ENCODE measurements at regions of chr10 and their contacts with region 1.

Region 1: DNA sequence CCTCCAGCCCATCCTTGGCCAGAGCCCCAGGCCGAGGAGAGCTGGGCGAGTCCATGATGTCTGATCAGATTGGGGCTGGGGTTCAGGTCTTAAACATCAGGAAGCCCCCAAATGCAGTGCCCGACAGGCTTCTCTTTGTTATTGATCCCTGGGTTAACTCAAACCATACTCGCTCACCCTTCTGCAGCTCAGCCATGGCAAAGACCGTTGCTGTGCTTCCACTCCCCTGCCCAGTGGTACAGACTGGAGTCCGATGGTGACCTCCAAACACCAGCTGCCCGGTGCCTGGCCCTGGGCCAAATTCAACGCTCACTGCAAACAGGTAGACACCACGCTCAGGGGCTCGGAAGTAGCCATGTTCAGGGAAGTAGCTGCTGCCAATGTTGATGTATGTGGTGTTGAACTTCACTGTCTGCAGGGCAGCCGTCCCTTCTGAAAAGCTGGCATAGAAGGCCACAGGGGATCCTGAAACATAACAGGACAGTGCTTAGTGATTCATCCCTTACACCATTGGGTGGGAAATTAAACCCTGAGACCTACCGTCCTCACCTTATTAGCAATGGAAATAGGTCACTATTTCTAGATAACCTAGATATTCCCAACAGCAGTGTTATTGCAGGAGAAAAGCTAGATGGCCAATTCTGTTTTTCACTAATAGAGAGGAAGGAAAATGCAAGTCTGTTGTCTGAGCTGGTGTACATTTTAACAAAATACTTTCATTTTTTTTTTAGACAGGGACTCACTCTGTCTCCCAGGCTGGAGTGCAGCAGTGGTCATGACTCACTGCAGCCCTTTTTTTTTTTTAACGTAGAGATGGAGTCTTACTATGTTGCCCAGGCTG is 20.5 kb downstream of the MMRN2 start:
- DNase-seq: no peak
- H3K4me3 ChIP-seq: no peak overlapping the region
- CTCF ChIP-seq: no peak

Region 2: DNA sequence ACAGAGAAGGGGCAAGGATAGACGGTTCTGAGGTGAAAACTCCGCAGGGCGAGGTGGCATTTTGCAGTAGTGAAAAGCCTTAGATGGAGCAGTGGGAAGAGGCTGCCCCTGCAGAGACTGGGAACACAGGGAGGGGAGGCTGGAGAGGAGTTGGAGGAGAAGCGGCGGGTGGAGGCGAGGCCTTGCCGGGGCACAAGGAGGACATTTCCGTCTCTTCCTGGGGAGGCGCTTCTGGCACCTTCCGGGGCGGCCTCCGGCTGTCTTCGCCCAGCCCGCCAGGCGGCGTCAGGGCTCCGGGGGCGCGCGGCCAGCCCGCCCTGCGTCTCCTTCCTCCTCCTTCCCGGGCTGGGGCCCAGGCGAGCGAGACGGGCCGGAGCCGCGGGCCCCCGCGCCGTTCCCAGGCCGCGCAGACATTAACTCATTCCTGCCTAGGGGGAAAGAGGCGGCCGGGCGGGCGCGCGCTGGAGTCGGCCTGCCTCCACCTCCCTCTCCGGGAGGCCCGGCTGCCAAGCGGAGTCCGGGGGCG is 225.8 kb before region 1 on chr10:
- CTCF ChIA-PET with region 1: interaction called, 10 read pairs
- POLR2A ChIA-PET with region 1: no interaction called
- DNase-seq: peak; percentile 10
- H3K4me3 ChIP-seq: peak overlapping the region; percentile 57
- CTCF ChIP-seq: peak; percentile 82

Region 3: DNA sequence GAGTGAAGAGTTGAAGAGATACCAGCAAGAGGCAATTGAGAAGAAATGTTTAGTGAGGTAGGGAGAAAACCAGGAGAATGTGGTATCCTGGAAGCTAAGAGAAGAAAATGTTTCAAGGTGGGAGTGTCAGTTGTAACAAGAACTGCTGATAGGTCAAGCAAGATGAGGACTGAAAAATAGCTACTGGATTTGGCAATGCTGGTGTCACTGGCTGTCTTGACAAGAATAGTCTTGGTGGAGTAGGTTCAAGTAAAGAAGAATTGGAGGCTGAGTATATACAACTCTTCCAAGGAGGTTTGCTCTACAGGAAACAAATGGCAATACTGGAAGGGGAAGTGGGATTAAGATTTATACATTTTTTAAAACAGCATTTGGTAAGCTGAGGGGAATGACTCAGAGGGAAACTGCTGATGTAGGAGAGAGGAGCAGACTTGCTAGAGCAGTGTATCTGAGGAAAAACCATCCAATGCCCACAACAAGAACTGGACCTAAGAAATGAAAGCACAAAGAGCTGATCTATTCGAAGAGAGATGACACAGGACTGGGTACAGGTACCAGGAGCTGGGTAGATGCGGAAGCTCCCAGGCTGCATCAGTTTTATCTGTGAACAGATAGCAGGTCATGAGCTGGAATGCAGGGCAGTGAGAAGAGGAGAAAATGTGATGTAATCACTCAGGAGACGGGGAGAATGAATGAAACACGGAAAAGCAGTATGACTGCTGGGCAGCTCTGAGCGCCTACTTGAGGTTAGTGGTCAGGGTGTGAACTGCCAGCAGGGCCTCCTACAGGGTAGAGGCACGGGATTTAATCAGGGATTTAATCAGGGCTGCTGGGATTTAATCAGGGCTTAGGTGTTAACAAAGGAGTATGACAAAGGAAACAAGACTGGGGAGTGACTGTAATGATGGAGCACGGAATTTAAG is 117.8 kb after region 1 on chr10:
- CTCF ChIA-PET with region 1: interaction called, 11 read pairs
- POLR2A ChIA-PET with region 1: no interaction called
- DNase-seq: peak; percentile 21
- H3K4me3 ChIP-seq: no peak overlapping the region
- CTCF ChIP-seq: peak; percentile 15

Measured in AG04449 (cell line).